ENCODE measurements at regions of chr3 and their contacts with region 1.

Region 1: GRCh38 chr3:11226042-11226370 is 46.2 kb upstream of the ATG7 start:
- DNase-seq: no peak
- H3K4me3 ChIP-seq: peak overlapping the region; percentile 8 to 66 (median 33)
- H3K4me3 Mint-ChIP-seq: peak overlapping the region; percentile 72 to 93
- H3K27ac ChIP-seq: peak overlapping the region; percentile 95 to 97
- H3K27ac Mint-ChIP-seq: peak overlapping the region; percentile 96 to 100 (median 99)
- H3K4me1 ChIP-seq: peaks cover 58 to 70% of the 10 kb centered on the region in 2 donors
- H3K4me1 Mint-ChIP-seq: peaks cover 63% of the 10 kb centered on the region
- H3K27me3 ChIP-seq: no peaks in the 10 kb centered on the region
- H3K27me3 Mint-ChIP-seq: peaks cover 0 to 1% (median 0%) of the 10 kb centered on the region in 3 donors
- CTCF ChIP-seq: no peak

Region 2: GRCh38 chr3:11072631-11073030 is 153.4 kb before region 1 on chr3:
- intact Hi-C with region 1: no loop called
- DNase-seq: peak; percentile 42 to 83 (median 53)
- H3K4me3 ChIP-seq: peak overlapping the region in 1 of 3 experiments; percentile 4
- H3K4me3 Mint-ChIP-seq: peak overlapping the region; percentile 43 to 56
- H3K27ac ChIP-seq: peak overlapping the region; percentile 49 to 54
- H3K27ac Mint-ChIP-seq: peak overlapping the region; percentile 72 to 90 (median 84)
- H3K4me1 ChIP-seq: peaks cover 46 to 48% of the 10 kb centered on the region in 2 donors
- H3K4me1 Mint-ChIP-seq: peaks cover 45% of the 10 kb centered on the region
- H3K27me3 ChIP-seq: no peaks in the 10 kb centered on the region
- H3K27me3 Mint-ChIP-seq: peaks cover 0 to 2% (median 0%) of the 10 kb centered on the region in 3 donors
- CTCF ChIP-seq: no peak

Region 3: GRCh38 chr3:11155341-11156025 is 70.5 kb before region 1 on chr3:
- intact Hi-C with region 1: loop called in 1 of 2 experiments (anchors 5 kb)
- DNase-seq: peak in 2 of 3 donors; percentile 4 to 22
- H3K4me3 ChIP-seq: no peak overlapping the region
- H3K4me3 Mint-ChIP-seq: peak overlapping the region; percentile 31 to 85
- H3K27ac ChIP-seq: no peak overlapping the region
- H3K27ac Mint-ChIP-seq: peak overlapping the region in 1 of 7 donors; percentile 2
- H3K4me1 ChIP-seq: peaks cover 28 to 43% of the 10 kb centered on the region in 2 donors
- H3K4me1 Mint-ChIP-seq: peaks cover 46% of the 10 kb centered on the region
- H3K27me3 ChIP-seq: peaks cover 31 to 43% of the 10 kb centered on the region in 2 donors
- H3K27me3 Mint-ChIP-seq: peaks cover 30 to 40% (median 36%) of the 10 kb centered on the region in 3 donors
- CTCF ChIP-seq: peak; percentile 49

Region 4: GRCh38 chr3:11271986-11272904 is 46.2 kb after region 1 on chr3 and contains the start of gene ATG7:
- intact Hi-C with region 1: loop called (anchors 5 kb)
- DNase-seq: peak; percentile 97 to 98 (median 97)
- H3K4me3 ChIP-seq: peak within 1 kb of the TSS; percentile 84 to 94 (median 84)
- H3K4me3 Mint-ChIP-seq: peak within 1 kb of the TSS; percentile 85 to 89
- H3K27ac ChIP-seq: peak within 1 kb of the TSS; percentile 98 to 100
- H3K27ac Mint-ChIP-seq: peak within 1 kb of the TSS; percentile 98 to 100 (median 99)
- H3K4me1 ChIP-seq: peaks cover 50 to 51% of the 10 kb centered on the region in 2 donors
- H3K4me1 Mint-ChIP-seq: peaks cover 47% of the 10 kb centered on the region
- H3K27me3 ChIP-seq: no peaks in the 10 kb centered on the region
- H3K27me3 Mint-ChIP-seq: peaks cover 2 to 12% (median 5%) of the 10 kb centered on the region in 3 donors
- CTCF ChIP-seq: no peak
- polyA plus RNA-seq, gene ATG7: 57.4 to 101 (median 89.7) TPM

Region 5: DNA sequence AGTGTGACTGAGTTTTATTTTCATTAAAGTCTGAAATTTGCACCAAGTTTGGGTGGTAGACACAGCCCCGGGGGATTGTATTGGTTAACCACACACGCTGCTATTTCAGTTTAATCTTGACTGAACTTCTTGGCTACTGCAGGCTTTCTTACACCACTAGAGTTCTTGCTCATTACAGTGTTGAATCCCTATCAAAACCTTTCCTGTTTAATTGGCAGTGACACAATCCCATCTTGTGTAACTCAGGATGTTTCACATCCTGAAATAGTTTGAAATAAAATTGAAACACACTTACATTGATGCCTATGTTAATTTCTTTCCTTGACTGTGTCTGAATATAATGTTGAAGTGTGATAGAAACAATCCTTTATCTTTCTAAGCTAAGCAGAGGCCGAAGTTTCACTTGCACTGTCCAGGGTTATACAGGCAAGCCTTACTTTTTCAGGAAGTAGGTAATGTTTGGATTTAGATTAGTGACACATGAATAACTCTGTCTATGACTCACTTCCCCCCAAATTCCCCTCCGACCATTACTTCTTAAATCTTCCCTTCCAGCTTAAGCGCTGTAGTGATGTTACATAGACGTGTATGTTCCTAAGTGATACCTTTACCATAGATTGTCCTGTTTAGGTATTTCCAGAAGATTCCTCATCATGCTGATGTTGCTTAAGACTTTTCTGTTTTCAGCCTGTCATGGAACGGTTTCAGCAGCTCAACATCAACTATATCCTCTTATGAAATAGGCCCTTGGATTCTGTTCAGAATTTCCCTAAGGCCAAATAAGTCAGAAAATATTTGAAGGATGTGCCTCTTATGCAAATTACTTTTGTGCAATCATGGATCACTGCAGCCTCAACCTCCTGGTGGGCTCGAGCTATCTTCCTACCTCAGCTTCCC is 63.0 kb after region 1 on chr3:
- intact Hi-C with region 1: loop called (anchors 5 kb)
- DNase-seq: peak; percentile 90 to 99 (median 96)
- H3K4me3 ChIP-seq: peak overlapping the region in 2 of 3 experiments; percentile 26 to 53
- H3K4me3 Mint-ChIP-seq: peak overlapping the region; percentile 56 to 67
- H3K27ac ChIP-seq: peak overlapping the region; percentile 96 to 98
- H3K27ac Mint-ChIP-seq: peak overlapping the region; percentile 96 to 100 (median 99)
- H3K4me1 ChIP-seq: peaks cover 70 to 74% of the 10 kb centered on the region in 2 donors
- H3K4me1 Mint-ChIP-seq: peaks cover 66% of the 10 kb centered on the region
- H3K27me3 ChIP-seq: no peaks in the 10 kb centered on the region
- H3K27me3 Mint-ChIP-seq: peaks cover 0 to 1% (median 0%) of the 10 kb centered on the region in 3 donors
- CTCF ChIP-seq: no peak